IMR-90 (cell line): ENCODE measurements at regions of chr3 and their contacts with region 1.

Region 1: DNA sequence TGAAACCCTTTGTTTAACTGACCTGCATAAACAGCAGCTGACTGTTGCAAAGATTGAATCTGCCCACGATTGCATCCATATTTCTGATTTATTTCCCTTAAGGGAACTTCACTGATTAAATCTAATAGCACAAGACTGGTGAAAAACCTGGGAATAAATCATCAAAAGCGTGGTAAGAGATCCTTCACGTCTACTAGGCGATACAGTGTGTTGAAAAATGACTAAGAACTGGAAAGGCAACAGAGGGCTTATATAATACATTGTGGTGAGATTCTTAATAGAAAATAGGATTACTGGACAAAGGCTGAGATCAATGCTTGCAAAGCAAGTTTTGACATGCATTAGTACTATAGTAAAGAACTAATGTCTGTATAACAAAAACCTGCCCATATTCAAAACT is 49.0 kb downstream of the POLQ start:
- DNase-seq: no peak
- ATAC-seq: no peak
- H3K4me3 ChIP-seq: no peak overlapping the region
- H3K27ac ChIP-seq: no peak overlapping the region
- H3K4me1 ChIP-seq: no peaks in the 10 kb centered on the region
- H3K27me3 ChIP-seq: no peaks in the 10 kb centered on the region
- CTCF ChIP-seq: no peak
- POLR2A ChIP-seq: no peak
- RAD21 ChIP-seq: no peak

Region 2: GRCh38 chr3:121482660-121483059 is 14.1 kb before region 1 on chr3:
- CTCF ChIA-PET with region 1: interaction called, 3 read pairs
- POLR2A ChIA-PET with region 1: interaction called, 12 read pairs
- dilution Hi-C with region 1: no loop called
- in situ Hi-C with region 1: no loop called
- intact Hi-C with region 1: no loop called
- DNase-seq: peak; percentile 91
- ATAC-seq: peak; percentile 72
- H3K4me3 ChIP-seq: no peak overlapping the region
- H3K27ac ChIP-seq: no peak overlapping the region
- H3K4me1 ChIP-seq: peaks cover 10% of the 10 kb centered on the region
- H3K27me3 ChIP-seq: no peaks in the 10 kb centered on the region
- CTCF ChIP-seq: no peak
- POLR2A ChIP-seq: no peak
- RAD21 ChIP-seq: no peak

Region 3: DNA sequence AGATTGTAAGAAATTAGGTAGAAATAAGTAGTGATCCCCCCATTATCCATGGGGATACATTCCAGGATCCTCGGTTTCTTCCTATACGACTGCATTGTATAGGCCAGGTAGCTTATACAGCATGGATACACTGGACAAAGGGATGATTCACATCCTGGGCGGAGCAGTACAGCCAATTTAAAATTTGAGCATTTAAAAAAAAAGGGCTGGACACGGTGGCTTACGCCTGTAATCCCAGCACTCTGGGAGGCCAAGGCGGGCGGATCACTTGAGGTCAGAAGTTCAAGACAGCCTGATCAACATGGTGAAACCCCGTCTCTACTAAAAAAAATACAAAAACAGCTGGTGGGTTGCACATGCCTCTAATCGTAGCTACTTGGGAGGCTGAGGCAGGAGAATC is 70.0 kb after region 1 on chr3:
- CTCF ChIA-PET with region 1: no interaction called
- POLR2A ChIA-PET with region 1: no interaction called
- dilution Hi-C with region 1: no loop called
- in situ Hi-C with region 1: no loop called
- intact Hi-C with region 1: no loop called
- DNase-seq: no peak
- ATAC-seq: no peak
- H3K4me3 ChIP-seq: no peak overlapping the region
- H3K27ac ChIP-seq: no peak overlapping the region
- H3K4me1 ChIP-seq: no peaks in the 10 kb centered on the region
- H3K27me3 ChIP-seq: no peaks in the 10 kb centered on the region
- CTCF ChIP-seq: no peak
- POLR2A ChIP-seq: no peak
- RAD21 ChIP-seq: no peak

Region 4: DNA sequence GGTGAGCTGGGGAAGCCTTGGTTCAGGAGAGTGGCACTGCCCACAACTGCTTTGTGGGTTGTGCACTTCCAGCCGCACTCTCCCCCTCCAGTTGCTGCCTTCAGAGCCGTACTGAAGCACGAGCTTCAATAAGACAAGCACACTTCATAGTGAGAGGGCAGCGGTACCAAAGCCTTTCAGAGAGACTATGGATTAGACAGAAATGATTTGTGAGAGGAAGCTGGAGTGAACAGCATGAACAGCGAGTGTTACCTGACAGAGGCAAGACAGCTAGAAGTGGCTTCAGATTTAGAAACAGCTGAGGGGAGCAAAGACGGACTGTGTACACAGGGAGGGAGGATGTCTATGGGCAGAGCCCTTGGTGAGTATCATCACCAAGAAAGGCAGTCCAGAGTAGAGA is 132.8 kb after region 1 on chr3:
- CTCF ChIA-PET with region 1: no interaction called
- POLR2A ChIA-PET with region 1: no interaction called
- dilution Hi-C with region 1: no loop called
- in situ Hi-C with region 1: no loop called
- intact Hi-C with region 1: no loop called
- DNase-seq: no peak
- ATAC-seq: no peak
- H3K4me3 ChIP-seq: no peak overlapping the region
- H3K27ac ChIP-seq: no peak overlapping the region
- H3K4me1 ChIP-seq: no peaks in the 10 kb centered on the region
- H3K27me3 ChIP-seq: peaks cover 4% of the 10 kb centered on the region
- CTCF ChIP-seq: no peak
- POLR2A ChIP-seq: no peak
- RAD21 ChIP-seq: no peak